ENCODE measurements at regions of chr1 and their contacts with region 1.

Region 1: GRCh38 chr1:111507411-111508201 is 4.2 kb upstream of the ADORA3 start:
- DNase-seq: peak; percentile 66
- ATAC-seq: peak; percentile 67
- H3K4me3 Mint-ChIP-seq: peak overlapping the region; percentile 77
- H3K27ac Mint-ChIP-seq: no peak overlapping the region
- H3K4me1 Mint-ChIP-seq: peaks cover 67% of the 10 kb centered on the region
- H3K27me3 Mint-ChIP-seq: no peaks in the 10 kb centered on the region
- CTCF ChIP-seq: no peak

Region 2: GRCh38 chr1:111346089-111346885 is 161.3 kb before region 1 on chr1:
- CTCF ChIA-PET with region 1: no interaction called
- POLR2A ChIA-PET with region 1: no interaction called
- intact Hi-C with region 1: loop called (anchors 2 kb)
- DNase-seq: peak; percentile 82
- ATAC-seq: peak; percentile 88
- H3K4me3 Mint-ChIP-seq: peak overlapping the region; percentile 93
- H3K27ac Mint-ChIP-seq: peak overlapping the region; percentile 85
- H3K4me1 Mint-ChIP-seq: peaks cover 13% of the 10 kb centered on the region
- H3K27me3 Mint-ChIP-seq: no peaks in the 10 kb centered on the region
- CTCF ChIP-seq: no peak

Region 3: DNA sequence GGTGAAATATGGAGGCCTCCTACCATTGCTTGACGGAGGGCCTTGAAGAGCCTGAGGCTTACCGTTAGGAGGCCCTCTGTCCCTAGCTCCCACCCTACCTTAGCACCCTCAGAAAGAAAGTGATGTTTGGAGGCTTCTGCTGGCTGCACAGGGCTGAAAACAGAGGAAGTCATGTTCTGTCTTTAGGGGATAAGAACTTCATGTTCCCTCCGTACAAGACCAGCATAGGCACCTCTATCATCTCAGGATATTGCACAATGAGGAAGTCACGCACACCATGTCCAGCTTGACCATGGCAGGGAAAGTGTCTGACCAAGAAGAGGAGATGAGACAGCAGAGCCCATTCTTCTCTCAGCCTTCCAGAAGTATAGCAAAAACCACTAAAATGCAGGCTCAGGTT is 18.0 kb before region 1 on chr1:
- CTCF ChIA-PET with region 1: interaction called, 123 read pairs
- POLR2A ChIA-PET with region 1: interaction called, 234 read pairs
- intact Hi-C with region 1: loop called (anchors 1 kb)
- DNase-seq: no peak
- ATAC-seq: peak; percentile 87
- H3K4me3 Mint-ChIP-seq: no peak overlapping the region
- H3K27ac Mint-ChIP-seq: peak overlapping the region; percentile 50
- H3K4me1 Mint-ChIP-seq: peaks cover 9% of the 10 kb centered on the region
- H3K27me3 Mint-ChIP-seq: no peaks in the 10 kb centered on the region
- CTCF ChIP-seq: no peak

Region 4: DNA sequence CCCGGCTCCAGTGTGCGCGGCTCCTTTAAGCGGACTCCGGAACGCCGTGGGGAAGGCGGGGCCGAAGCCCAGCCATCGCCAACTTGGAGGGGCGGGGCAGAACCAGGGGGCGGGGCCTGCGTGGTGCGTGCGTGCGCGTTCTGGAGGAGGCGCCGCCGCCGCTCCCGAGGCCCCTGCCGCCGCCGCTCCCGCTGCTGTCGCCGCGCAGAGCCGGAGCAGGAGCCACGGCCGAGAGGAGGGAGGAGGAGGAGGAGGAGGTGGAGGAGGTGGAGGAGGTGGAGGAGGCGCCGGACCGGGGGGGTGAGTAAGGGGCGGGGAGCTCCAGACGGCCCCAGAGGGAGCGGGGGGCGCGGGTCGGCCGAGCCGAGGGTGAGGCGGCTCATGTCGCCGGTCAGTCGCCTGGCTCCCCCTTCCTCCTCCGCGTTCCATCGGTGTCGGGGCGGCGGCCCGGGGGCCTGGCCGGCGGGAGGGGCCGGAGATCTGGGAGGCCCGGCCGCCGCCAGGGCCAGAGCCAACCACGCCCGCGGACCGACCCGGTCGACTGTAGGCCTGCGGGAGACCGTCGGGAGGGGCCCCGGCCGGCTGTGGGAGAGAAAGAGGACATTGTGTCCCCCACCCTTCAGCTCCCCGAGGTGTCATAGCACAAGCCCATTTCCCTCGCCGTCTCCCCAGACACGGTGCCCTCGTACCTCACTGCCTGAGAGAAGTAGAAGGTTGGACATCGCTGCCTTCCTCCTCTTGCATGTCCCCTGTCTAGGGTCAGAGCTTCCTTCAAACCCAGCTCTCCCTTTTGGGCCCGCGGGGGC is 112.2 kb after region 1 on chr1 and contains the start of gene RAP1A:
- CTCF ChIA-PET with region 1: interaction called, 21 read pairs
- POLR2A ChIA-PET with region 1: interaction called, 32 read pairs
- intact Hi-C with region 1: loop called (anchors 1 kb)
- DNase-seq: peak; percentile 88
- ATAC-seq: peak; percentile 77
- H3K4me3 Mint-ChIP-seq: peak within 1 kb of the TSS; percentile 95
- H3K27ac Mint-ChIP-seq: peak within 1 kb of the TSS; percentile 93
- H3K4me1 Mint-ChIP-seq: peaks cover 82% of the 10 kb centered on the region
- H3K27me3 Mint-ChIP-seq: no peaks in the 10 kb centered on the region
- CTCF ChIP-seq: no peak
- total RNA-seq, gene RAP1A: 92.4 and 93.8 TPM in 2 replicates

Region 5: DNA sequence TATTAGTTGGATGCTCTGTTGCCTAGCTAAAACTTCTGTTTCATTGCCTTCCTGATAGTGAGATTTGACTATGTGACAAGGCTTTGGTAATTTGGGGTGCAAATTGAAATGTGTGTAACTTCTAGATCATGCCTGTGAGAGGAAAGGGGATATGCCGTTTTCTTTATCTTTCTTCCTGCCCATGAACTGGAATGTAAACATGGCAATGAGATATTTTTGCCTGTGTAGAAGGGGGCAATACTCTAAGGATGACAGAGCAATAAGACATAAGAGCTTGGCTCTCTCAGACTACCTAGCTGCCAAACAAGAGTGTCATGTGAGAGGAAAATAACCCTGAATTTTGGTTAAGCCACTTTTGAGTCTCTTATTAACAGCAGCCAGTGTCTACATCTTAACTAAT is 161.7 kb after region 1 on chr1:
- CTCF ChIA-PET with region 1: interaction called, 10 read pairs
- POLR2A ChIA-PET with region 1: interaction called, 3 read pairs
- intact Hi-C with region 1: no loop called
- DNase-seq: no peak
- ATAC-seq: no peak
- H3K4me3 Mint-ChIP-seq: no peak overlapping the region
- H3K27ac Mint-ChIP-seq: peak overlapping the region; percentile 38
- H3K4me1 Mint-ChIP-seq: peaks cover 61% of the 10 kb centered on the region
- H3K27me3 Mint-ChIP-seq: no peaks in the 10 kb centered on the region
- CTCF ChIP-seq: no peak

Region 6: DNA sequence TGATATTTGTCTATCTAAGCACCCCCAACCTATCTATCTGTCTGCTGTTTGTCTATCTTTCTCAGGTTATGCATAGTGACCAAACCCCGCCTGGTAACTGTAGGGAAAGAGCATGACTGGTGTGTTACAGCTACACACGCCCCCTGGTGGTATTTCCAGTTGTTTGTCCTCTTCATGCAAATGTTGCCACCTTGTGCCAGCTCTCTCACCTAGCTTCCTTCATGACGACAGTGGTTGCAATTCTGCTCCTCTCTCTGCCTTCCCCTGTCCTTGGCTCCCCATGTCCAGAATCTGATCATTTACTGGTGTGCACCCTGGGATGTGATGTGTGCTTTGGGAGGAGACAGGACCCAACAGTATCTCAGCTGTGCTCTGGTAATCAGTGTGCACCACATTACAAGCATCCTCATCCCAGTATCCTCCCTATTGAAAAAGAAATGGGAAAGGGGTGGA is 239.7 kb after region 1 on chr1:
- CTCF ChIA-PET with region 1: interaction called, 20 read pairs
- POLR2A ChIA-PET with region 1: interaction called, 5 read pairs
- intact Hi-C with region 1: loop called (anchors 2 kb)
- DNase-seq: no peak
- ATAC-seq: peak; percentile 77
- H3K4me3 Mint-ChIP-seq: no peak overlapping the region
- H3K27ac Mint-ChIP-seq: no peak overlapping the region
- H3K4me1 Mint-ChIP-seq: no peaks in the 10 kb centered on the region
- H3K27me3 Mint-ChIP-seq: no peaks in the 10 kb centered on the region
- CTCF ChIP-seq: no peak

Region 7: GRCh38 chr1:111924786-111925185 is 417.2 kb after region 1 on chr1:
- CTCF ChIA-PET with region 1: no interaction called
- POLR2A ChIA-PET with region 1: no interaction called
- intact Hi-C with region 1: no loop called
- DNase-seq: no peak
- ATAC-seq: no peak
- H3K4me3 Mint-ChIP-seq: no peak overlapping the region
- H3K27ac Mint-ChIP-seq: no peak overlapping the region
- H3K4me1 Mint-ChIP-seq: no peaks in the 10 kb centered on the region
- H3K27me3 Mint-ChIP-seq: peaks cover 17% of the 10 kb centered on the region
- CTCF ChIP-seq: no peak

Measured in activated B cell treated with CpG ODN at 0.5 μM for 24 hours (primary cell).